Right ventricle myocardium superior (tissue), 1 donor: ENCODE measurements at regions of chr2 and their contacts with region 1.

Region 1: GRCh38 chr2:11562011-11562410 is 28.2 kb downstream of the GREB1 start:
- DNase-seq: no peak
- ATAC-seq: no peak

Region 2: DNA sequence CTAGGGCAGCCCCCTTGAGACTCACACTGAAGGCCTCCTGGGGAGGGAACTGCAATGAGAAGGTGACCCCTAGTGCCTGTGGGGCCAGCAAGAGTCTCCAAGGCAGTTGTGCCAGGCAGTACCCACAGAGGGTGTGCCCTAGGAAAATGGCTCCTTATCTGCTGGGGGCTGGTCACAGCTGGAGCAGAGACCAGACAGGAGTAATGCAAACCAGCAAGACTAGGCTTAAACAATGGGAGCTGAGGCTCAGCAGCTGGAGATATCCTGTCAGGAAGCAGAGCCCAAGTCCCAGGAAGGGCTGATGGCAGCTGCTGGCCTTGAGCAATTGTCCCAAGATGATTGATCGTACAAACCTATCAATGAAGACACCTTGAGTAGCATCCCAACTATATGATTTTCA is 69.3 kb before region 1 on chr2:
- intact Hi-C with region 1: loop called (anchors 5 kb)
- DNase-seq: no peak
- ATAC-seq: no peak